GM12878 (cell line): ENCODE measurements at regions of chr11 and their contacts with region 1.

Region 1: DNA sequence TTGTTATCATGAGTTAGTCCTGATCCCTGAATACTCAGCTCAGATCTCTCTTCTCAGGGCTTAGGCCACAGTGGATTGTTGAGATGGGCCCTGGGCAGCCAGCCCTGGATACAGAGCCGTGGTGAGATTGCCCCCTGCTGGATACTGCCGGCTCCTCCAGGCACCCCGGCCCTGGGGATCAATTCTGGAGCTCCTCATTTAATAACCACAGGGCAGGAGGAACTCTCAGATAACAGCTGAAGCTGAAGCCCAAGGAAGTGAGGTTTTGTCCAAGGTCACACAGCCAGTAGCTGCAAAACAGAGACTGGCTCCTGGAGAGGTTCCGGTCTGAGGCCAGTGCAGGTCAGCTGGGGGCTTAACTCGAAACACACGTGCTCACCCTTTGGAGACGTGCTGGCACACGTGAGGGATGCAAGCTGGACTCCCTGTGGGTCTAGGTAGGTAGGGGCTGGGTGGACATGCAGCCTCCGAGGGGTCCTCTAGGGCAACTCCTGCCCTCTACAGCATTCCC is 16.0 kb downstream of the USH1C start:
- DNase-seq: no peak
- ATAC-seq: peak; percentile 98
- H3K4me3 ChIP-seq: no peak overlapping the region
- H3K27ac ChIP-seq: no peak overlapping the region
- H3K4me1 ChIP-seq: no peaks in the 10 kb centered on the region
- H3K27me3 ChIP-seq: peaks cover 0 to 3% of the 10 kb centered on the region in 2 experiments; a peak in 2 of 4 replicates
- CTCF ChIP-seq: peak; percentile 54 to 82 (median 77)
- EP300 ChIP-seq: no peak
- POLR2A ChIP-seq: no peak
- RAD21 ChIP-seq: peak; percentile 75

Region 2: GRCh38 chr11:17513853-17514252 is 14.4 kb before region 1 on chr11:
- CTCF ChIA-PET with region 1: interaction called, 16 read pairs
- POLR2A ChIA-PET with region 1: no interaction called
- RAD21 ChIA-PET with region 1: no interaction called
- SMC1A ChIA-PET with region 1: interaction called, 6 read pairs
- in situ Hi-C with region 1: no loop called
- intact Hi-C with region 1: no loop called
- DNase-seq: no peak
- ATAC-seq: no peak
- H3K4me3 ChIP-seq: no peak overlapping the region
- H3K27ac ChIP-seq: no peak overlapping the region
- H3K4me1 ChIP-seq: no peaks in the 10 kb centered on the region
- H3K27me3 ChIP-seq: peaks cover 0 to 2% of the 10 kb centered on the region in 2 experiments; a peak in 3 of 4 replicates
- CTCF ChIP-seq: no peak
- EP300 ChIP-seq: no peak
- POLR2A ChIP-seq: no peak
- RAD21 ChIP-seq: no peak

Region 3: GRCh38 chr11:17554487-17554886 is 26.3 kb after region 1 on chr11:
- CTCF ChIA-PET with region 1: no interaction called
- POLR2A ChIA-PET with region 1: no interaction called
- RAD21 ChIA-PET with region 1: no interaction called
- SMC1A ChIA-PET with region 1: no interaction called
- in situ Hi-C with region 1: no loop called
- intact Hi-C with region 1: no loop called
- DNase-seq: no peak
- ATAC-seq: peak; percentile 50; the same call in 2 of the 3 replicates
- H3K4me3 ChIP-seq: no peak overlapping the region
- H3K27ac ChIP-seq: no peak overlapping the region
- H3K4me1 ChIP-seq: no peaks in the 10 kb centered on the region
- H3K27me3 ChIP-seq: peaks cover 0 to under 1% of the 10 kb centered on the region in 2 experiments; a peak in 2 of 4 replicates
- CTCF ChIP-seq: no peak
- EP300 ChIP-seq: no peak
- POLR2A ChIP-seq: no peak
- RAD21 ChIP-seq: no peak

Region 4: DNA sequence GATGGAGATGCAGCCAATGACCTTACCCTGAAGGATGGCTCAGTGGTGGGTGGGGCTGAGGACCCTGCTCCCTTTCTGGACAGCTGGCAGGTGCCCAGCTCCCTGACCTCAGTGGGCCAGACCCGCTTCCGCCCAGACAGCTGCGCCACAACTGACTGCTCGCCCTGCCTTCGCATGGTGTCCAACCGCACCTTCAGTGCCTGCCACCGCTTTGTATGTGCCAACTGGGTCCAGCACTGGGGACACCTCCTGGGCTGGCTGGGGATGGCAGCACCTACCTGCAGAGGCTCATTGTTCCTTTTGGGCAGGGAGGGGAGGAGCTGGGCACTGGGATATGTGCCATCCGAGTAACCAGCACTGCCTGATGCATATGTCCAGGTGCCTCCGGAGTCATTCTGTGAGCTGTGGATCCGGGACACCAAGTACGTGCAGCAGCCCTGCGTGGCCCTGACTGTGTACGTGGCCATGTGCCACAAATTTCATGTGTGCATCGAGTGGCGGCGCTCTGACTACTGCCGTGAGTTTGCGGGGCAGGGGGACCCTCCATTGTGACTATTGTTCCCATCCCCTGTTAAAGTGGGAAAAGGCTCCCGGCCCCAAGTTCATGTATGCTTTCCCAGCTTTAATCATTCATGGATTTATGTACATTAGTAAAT is 103.6 kb after region 1 on chr11:
- CTCF ChIA-PET with region 1: no interaction called
- POLR2A ChIA-PET with region 1: no interaction called
- RAD21 ChIA-PET with region 1: no interaction called
- SMC1A ChIA-PET with region 1: no interaction called
- in situ Hi-C with region 1: no loop called
- intact Hi-C with region 1: no loop called
- DNase-seq: no peak
- ATAC-seq: no peak
- H3K4me3 ChIP-seq: no peak overlapping the region
- H3K27ac ChIP-seq: no peak overlapping the region
- H3K4me1 ChIP-seq: no peaks in the 10 kb centered on the region
- H3K27me3 ChIP-seq: no peaks in the 10 kb centered on the region; a peak in 1 of 4 replicates
- CTCF ChIP-seq: no peak
- EP300 ChIP-seq: no peak
- POLR2A ChIP-seq: no peak
- RAD21 ChIP-seq: no peak